Colonic mucosa (tissue), 4 donors: ENCODE measurements at regions of chr22 and their contacts with region 1.

Region 1: GRCh38 chr22:24230911-24231656 is 13.8 kb downstream of the GGT5 start:
- DNase-seq: peak; percentile 60
- H3K4me3 ChIP-seq: no peak overlapping the region
- H3K27ac ChIP-seq: no peak overlapping the region
- H3K4me1 ChIP-seq: no peaks in the 10 kb centered on the region
- H3K27me3 ChIP-seq: no peaks in the 10 kb centered on the region
- CTCF ChIP-seq: peak; percentile 37

Region 2: GRCh38 chr22:24189249-24190158 is 41.6 kb before region 1 on chr22:
- intact Hi-C with region 1: loop called (anchors 5 kb)
- DNase-seq: peak; percentile 75
- H3K4me3 ChIP-seq: no peak overlapping the region
- H3K27ac ChIP-seq: no peak overlapping the region
- H3K4me1 ChIP-seq: no peaks in the 10 kb centered on the region
- H3K27me3 ChIP-seq: no peaks in the 10 kb centered on the region
- CTCF ChIP-seq: peak; percentile 80